ENCODE measurements at regions of chr12 and their contacts with region 1.

Region 1: DNA sequence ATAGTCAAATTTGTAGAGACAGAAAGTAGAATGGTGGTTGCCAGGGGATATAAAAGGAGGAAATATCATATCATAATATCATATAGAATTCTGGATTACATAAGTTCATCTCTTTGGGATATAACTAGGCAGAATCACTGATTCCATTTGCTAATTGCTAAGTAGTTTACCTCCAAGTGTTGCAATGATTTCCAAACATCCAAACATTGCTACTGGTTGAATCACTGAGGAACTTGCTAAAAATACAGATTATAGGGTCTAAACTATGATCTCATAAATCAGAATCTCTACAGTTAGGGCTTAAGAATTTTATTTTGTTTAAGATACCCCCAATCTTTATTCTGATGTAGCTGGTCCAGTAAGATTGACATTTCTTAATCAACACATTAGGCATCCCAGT is 16.1 kb upstream of the TAS2R42 start:
- DNase-seq: no peak
- H3K4me3 ChIP-seq: no peak overlapping the region
- H3K27ac ChIP-seq: no peak overlapping the region
- H3K4me1 ChIP-seq: no peaks in the 10 kb centered on the region
- H3K27me3 ChIP-seq: no peaks in the 10 kb centered on the region
- CTCF ChIP-seq: no peak
- EP300 ChIP-seq: no peak
- POLR2A ChIP-seq: no peak

Region 2: GRCh38 chr12:10771132-10771733 is 431.6 kb before region 1 on chr12:
- intact Hi-C with region 1: loop called in 2 of 4 experiments (anchors 5 kb)
- DNase-seq: no peak
- H3K4me3 ChIP-seq: no peak overlapping the region
- H3K27ac ChIP-seq: no peak overlapping the region
- H3K4me1 ChIP-seq: no peaks in the 10 kb centered on the region
- H3K27me3 ChIP-seq: no peaks in the 10 kb centered on the region
- CTCF ChIP-seq: peak in 2 of 3 donors; percentile 49 to 56
- EP300 ChIP-seq: no peak
- POLR2A ChIP-seq: no peak

Region 3: GRCh38 chr12:10783252-10783651 is 419.6 kb before region 1 on chr12:
- intact Hi-C with region 1: loop called in 1 of 4 experiments (anchors 5 kb)
- DNase-seq: no peak
- H3K4me3 ChIP-seq: no peak overlapping the region
- H3K27ac ChIP-seq: no peak overlapping the region
- H3K4me1 ChIP-seq: no peaks in the 10 kb centered on the region
- H3K27me3 ChIP-seq: no peaks in the 10 kb centered on the region
- CTCF ChIP-seq: no peak
- EP300 ChIP-seq: no peak
- POLR2A ChIP-seq: no peak